Mammary epithelial cell (primary cell): ENCODE measurements at regions of chr12 and their contacts with region 1.

Region 1: DNA sequence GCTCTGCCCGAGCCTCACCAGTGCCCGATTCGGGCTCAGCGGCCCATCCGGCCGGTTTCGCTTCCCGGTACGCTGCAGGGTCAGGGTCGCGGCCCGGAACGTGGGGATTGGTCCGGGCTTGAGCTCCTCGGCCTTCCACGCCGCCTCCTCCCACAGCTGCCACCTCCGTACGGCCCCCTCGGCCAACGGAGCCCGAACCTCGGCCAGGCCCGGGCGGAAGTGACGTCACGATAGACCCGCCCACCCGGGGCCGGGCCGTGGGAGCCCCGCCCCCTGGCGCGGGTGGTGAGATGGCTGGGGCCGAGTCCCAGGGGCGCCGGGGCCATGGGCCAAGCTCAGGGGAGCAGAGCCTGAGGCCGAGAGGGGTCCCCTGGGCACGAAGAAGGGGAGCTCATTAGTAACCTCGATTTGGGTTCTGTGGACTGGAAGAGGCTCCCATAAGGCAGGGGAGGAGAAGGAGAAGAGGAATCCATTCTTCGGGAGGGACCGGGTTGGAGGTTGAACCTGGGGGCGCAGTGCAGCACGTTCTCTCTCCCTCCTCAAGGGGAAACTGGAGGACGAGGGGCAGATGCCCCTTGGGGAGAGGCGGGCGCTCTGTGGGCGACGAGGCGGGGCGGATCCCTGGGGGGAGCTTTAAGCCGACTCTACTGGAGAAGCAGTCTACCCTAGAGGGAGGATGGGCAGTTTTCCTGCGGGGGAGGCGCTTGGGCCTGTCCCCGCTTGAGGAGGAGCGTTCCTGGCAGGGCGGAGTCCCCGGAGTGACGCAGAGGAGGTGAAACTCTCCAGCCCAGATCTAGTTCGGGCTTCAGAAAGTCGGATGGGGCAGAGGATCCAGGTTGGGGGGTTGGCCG is at the start of gene MLF2:
- DNase-seq: peak; percentile 98
- H3K4me3 ChIP-seq: peak within 1 kb of the TSS; percentile 49 to 99 (median 81)
- H3K27ac ChIP-seq: peak within 1 kb of the TSS; percentile 92
- H3K4me1 ChIP-seq: peaks cover 24% of the 10 kb centered on the region
- H3K27me3 ChIP-seq: no peaks in the 10 kb centered on the region
- CTCF ChIP-seq: peak; percentile 82 to 97
- total RNA-seq, gene MLF2: 233 to 294 TPM

Region 2: DNA sequence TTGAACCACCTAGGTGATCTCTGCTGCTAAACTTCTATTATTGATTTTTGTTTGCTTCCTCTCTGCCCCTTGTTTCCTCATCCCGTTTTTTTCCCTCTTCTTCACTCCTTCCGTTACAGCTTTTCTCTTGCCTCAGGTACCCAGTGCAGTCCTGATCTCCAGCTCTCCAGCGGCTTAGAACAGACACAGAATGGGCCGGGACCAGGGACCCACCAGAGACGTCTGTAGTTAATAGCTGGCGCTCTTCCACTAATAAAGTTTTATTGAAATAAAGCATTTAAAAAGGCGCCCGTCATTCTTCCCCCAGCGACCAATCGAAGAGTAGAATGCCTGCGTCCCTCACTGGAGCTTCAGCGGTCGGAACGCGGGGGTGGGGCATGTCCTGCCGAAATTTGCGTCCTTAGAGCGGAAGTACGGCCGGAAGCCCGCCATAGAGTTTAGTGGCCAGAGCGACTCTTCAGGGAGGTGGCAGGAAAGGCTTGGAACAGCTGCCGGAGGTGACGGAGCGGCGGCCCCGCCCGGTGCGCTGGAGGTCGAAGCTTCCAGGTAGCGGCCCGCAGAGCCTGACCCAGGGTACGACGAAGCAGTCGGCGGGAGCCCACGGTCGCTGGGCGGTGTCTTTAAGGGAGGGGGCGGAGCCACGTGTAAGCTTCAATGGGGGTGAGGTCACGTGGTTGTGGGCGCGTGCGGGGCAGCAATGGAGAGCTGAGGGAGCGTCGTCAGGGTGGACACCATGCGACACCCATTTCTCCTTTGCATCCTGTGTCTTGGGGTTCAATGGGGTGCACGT is 29.3 kb before region 1 on chr12 and contains the start of gene COPS7A:
- CTCF ChIA-PET with region 1: no interaction called
- dilution Hi-C with region 1: no loop called
- in situ Hi-C with region 1: no loop called
- intact Hi-C with region 1: loop called (anchors 1 kb)
- DNase-seq: peak; percentile 99
- H3K4me3 ChIP-seq: peak within 1 kb of the TSS; percentile 63 to 79 (median 70)
- H3K27ac ChIP-seq: peak within 1 kb of the TSS; percentile 69
- H3K4me1 ChIP-seq: peaks cover 6% of the 10 kb centered on the region
- H3K27me3 ChIP-seq: no peaks in the 10 kb centered on the region
- CTCF ChIP-seq: no peak
- total RNA-seq, gene COPS7A: 54.2 to 57.2 TPM

Region 3: DNA sequence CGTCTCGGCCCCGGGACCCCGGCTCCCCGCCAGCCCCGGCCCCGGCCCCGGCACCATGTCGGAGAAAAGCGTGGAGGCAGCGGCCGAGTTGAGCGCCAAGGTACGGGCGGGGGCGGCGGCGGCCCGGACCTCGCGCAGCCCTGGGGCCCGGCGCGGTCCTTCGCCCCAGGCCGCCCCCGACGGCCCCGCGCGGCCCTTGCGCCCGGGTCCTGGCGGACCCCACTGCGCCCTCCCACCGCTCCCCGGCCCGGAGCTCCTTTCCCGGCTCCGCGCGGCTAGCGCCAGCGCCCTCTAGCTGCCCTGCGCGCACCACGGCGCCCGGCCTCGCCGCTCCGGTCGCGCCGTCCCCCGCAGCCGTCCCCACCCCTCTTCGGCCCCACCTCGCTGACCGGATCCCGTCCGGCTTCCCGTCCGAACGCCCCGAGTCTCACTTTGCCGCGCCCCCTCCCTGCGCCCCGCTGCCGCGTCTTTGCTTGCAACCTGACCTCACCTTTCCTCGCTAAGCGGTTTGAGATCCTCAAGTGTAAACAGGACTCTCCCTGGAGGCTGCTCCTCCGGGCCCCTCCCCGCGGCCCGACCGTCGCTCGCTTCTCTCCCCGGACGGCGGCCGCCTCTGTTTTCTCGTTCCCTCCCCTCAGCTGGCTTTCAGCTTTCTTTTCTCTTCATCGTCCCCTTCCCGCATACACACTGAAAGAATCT is 13.7 kb after region 1 on chr12:
- CTCF ChIA-PET with region 1: interaction called, 23 read pairs
- dilution Hi-C with region 1: no loop called
- in situ Hi-C with region 1: no loop called
- intact Hi-C with region 1: loop called (anchors 1 kb)
- DNase-seq: peak; percentile 73
- H3K4me3 ChIP-seq: peak overlapping the region; percentile 41 to 78 (median 76)
- H3K27ac ChIP-seq: no peak overlapping the region
- H3K4me1 ChIP-seq: peaks cover 33% of the 10 kb centered on the region
- H3K27me3 ChIP-seq: no peaks in the 10 kb centered on the region
- CTCF ChIP-seq: peak; percentile 28 to 50

Region 4: DNA sequence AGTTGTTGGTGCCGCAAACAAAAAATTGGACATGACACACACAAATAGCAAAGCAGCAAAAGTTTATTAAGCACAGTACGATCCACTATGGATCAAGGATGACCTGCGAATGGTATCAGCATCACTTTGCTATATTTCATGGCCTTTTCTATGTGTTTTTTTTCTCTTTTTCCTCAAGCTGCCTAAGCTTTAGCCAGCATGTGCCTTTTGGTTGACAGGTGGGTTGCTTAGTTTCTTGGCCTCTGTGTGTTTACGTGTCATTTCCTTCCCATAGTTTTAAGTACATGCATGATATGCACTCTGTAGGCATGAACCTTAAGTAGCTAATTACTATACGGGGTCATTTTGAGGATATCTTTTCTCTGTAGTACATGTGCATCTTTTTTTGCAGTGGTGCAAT is 46.0 kb after region 1 on chr12:
- CTCF ChIA-PET with region 1: no interaction called
- dilution Hi-C with region 1: no loop called
- in situ Hi-C with region 1: no loop called
- intact Hi-C with region 1: no loop called
- DNase-seq: no peak
- H3K4me3 ChIP-seq: no peak overlapping the region
- H3K27ac ChIP-seq: no peak overlapping the region
- H3K4me1 ChIP-seq: no peaks in the 10 kb centered on the region
- H3K27me3 ChIP-seq: no peaks in the 10 kb centered on the region
- CTCF ChIP-seq: no peak

Region 5: GRCh38 chr12:6834873-6835272 is 81.7 kb after region 1 on chr12:
- CTCF ChIA-PET with region 1: no interaction called
- dilution Hi-C with region 1: no loop called
- in situ Hi-C with region 1: no loop called
- intact Hi-C with region 1: loop called (anchors 2 kb)
- DNase-seq: no peak
- H3K4me3 ChIP-seq: no peak overlapping the region
- H3K27ac ChIP-seq: no peak overlapping the region
- H3K4me1 ChIP-seq: no peaks in the 10 kb centered on the region
- H3K27me3 ChIP-seq: peaks cover 4% of the 10 kb centered on the region
- CTCF ChIP-seq: no peak